Natural killer cell (primary cell): ENCODE measurements at regions of chr1 and their contacts with region 1.

Region 1: GRCh38 chr1:109910123-109910962 is at the start of gene CSF1:
- DNase-seq: peak; percentile 52 to 81
- ATAC-seq: peak; percentile 61 to 77 (median 75)
- H3K4me3 ChIP-seq: peak within 1 kb of the TSS; percentile 46
- H3K4me3 Mint-ChIP-seq: peak within 1 kb of the TSS; percentile 89
- H3K27ac ChIP-seq: no peak within 1 kb of the TSS
- H3K27ac Mint-ChIP-seq: peak within 1 kb of the TSS; percentile 18 to 81
- H3K4me1 ChIP-seq: peaks cover 33% of the 10 kb centered on the region
- H3K4me1 Mint-ChIP-seq: peaks cover 25 to 30% of the 10 kb centered on the region in 2 donors
- H3K27me3 ChIP-seq: peaks cover 14% of the 10 kb centered on the region
- H3K27me3 Mint-ChIP-seq: peaks cover 34 to 51% of the 10 kb centered on the region in 2 donors
- CTCF ChIP-seq: no peak
- total RNA-seq, gene CSF1: 2.1 to 57.9 (median 3.7) TPM

Region 2: GRCh38 chr1:109802901-109803561 is 107.3 kb before region 1 on chr1:
- intact Hi-C with region 1: loop called (anchors 5 kb)
- DNase-seq: no peak
- ATAC-seq: no peak
- H3K4me3 ChIP-seq: no peak overlapping the region
- H3K4me3 Mint-ChIP-seq: peak overlapping the region; percentile 64
- H3K27ac ChIP-seq: peak overlapping the region; percentile 17
- H3K27ac Mint-ChIP-seq: peak overlapping the region; percentile 48 to 79
- H3K4me1 ChIP-seq: peaks cover 45% of the 10 kb centered on the region
- H3K4me1 Mint-ChIP-seq: peaks cover 35 to 37% of the 10 kb centered on the region in 2 donors
- H3K27me3 ChIP-seq: peaks cover 20% of the 10 kb centered on the region
- H3K27me3 Mint-ChIP-seq: peaks cover 7 to 20% of the 10 kb centered on the region in 2 donors
- CTCF ChIP-seq: no peak